Activated CD4-positive, alpha-beta memory T cell treated with anti-CD3 and anti-CD28 coated beads, Interleukin-2, amount 10 ng/mL, durations not matched to agents 7 days and 5 days (primary cell): ENCODE measurements at regions of chr11 and their contacts with region 1.

Region 1: GRCh38 chr11:94973099-94973968 is at the starts of genes CWC15 and KDM4D:
- DNase-seq: peak; percentile 95
- H3K4me3 Mint-ChIP-seq: peak within 1 kb of the TSS; percentile 99
- H3K27ac Mint-ChIP-seq: peak within 1 kb of the TSS; percentile 88
- H3K4me1 Mint-ChIP-seq: peaks cover 53% of the 10 kb centered on the region
- H3K27me3 Mint-ChIP-seq: no peaks in the 10 kb centered on the region
- total RNA-seq, gene CWC15: 56.5 to 59.1 TPM
- total RNA-seq, gene KDM4D: 0.83 to 1.1 TPM

Region 2: GRCh38 chr11:94959179-94959578 is 14.2 kb before region 1 on chr11:
- CTCF ChIA-PET with region 1: interaction called, 3 read pairs
- POLR2A ChIA-PET with region 1: interaction called, 17 read pairs
- DNase-seq: no peak
- H3K4me3 Mint-ChIP-seq: no peak overlapping the region
- H3K27ac Mint-ChIP-seq: no peak overlapping the region
- H3K4me1 Mint-ChIP-seq: no peaks in the 10 kb centered on the region
- H3K27me3 Mint-ChIP-seq: peaks cover 1% of the 10 kb centered on the region